Posterior cingulate gyrus (tissue), 11 donors: ENCODE measurements at regions of chr12 and their contacts with region 1.

Region 1: GRCh38 chr12:11798856-11799501 is 149.5 kb downstream of the ETV6 start:
- DNase-seq: no peak

Region 2: GRCh38 chr12:11648831-11649702 is 149.9 kb before region 1 on chr12 and contains the start of gene ETV6:
- intact Hi-C with region 1: loop called (anchors 10 kb)
- DNase-seq: peak in 9 of 10 donors; percentile 33 to 91 (median 57)